IMR-90 (cell line): ENCODE measurements at regions of chr9 and their contacts with region 1.

Region 1: GRCh38 chr9:5696884-5697283 is 68.0 kb downstream of the RIC1 start:
- DNase-seq: no peak
- ATAC-seq: no peak
- H3K4me3 ChIP-seq: no peak overlapping the region
- H3K27ac ChIP-seq: no peak overlapping the region
- H3K4me1 ChIP-seq: peaks cover 18% of the 10 kb centered on the region
- H3K27me3 ChIP-seq: no peaks in the 10 kb centered on the region
- CTCF ChIP-seq: no peak
- POLR2A ChIP-seq: no peak
- RAD21 ChIP-seq: no peak

Region 2: DNA sequence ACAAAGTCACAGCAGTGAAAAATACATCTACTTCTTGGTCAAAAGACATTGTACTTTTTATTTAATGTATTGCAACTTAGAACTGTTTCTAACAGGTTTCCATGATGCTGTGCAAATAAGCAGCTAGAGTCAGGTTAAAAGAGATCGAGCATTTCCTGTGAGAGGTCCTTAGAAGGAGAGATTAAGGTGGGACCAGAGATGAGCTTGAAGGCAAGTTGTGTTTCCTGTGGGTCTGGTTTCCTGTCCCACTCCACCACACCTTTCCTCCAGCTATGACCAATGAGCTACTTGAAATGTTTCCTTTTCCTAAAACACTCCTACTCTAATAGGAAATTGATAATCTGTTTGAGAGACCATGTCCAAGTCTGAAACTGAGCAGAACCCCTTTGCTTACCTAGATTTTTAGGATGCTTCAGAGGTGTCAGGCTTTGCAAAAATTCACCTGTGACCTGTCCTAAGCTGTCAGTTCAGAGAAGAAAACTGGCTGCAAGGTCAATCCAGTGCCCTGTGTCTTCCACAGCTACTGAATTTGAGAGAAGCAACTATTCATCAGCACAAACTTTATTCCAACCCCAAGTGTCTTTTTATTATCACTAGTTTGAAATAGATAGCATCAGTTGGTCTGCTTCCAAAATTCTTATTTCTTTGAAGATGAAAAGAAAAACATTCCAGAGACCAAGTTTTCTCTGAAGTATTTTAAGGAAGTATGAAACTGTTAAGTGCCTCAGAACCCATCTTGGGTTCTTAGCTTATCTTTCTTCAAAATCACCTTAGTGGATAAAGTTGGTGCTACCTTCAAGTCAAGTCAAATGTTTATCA is 344.0 kb before region 1 on chr9:
- CTCF ChIA-PET with region 1: no interaction called
- POLR2A ChIA-PET with region 1: no interaction called
- dilution Hi-C with region 1: no loop called
- in situ Hi-C with region 1: no loop called
- intact Hi-C with region 1: no loop called
- DNase-seq: no peak
- ATAC-seq: no peak
- H3K4me3 ChIP-seq: no peak overlapping the region
- H3K27ac ChIP-seq: no peak overlapping the region
- H3K4me1 ChIP-seq: no peaks in the 10 kb centered on the region
- H3K27me3 ChIP-seq: peaks cover 1% of the 10 kb centered on the region; the same call in 1 of the 2 replicates
- CTCF ChIP-seq: no peak
- POLR2A ChIP-seq: no peak
- RAD21 ChIP-seq: no peak

Region 3: GRCh38 chr9:5644501-5644900 is 52.4 kb before region 1 on chr9:
- CTCF ChIA-PET with region 1: no interaction called
- POLR2A ChIA-PET with region 1: no interaction called
- dilution Hi-C with region 1: no loop called
- in situ Hi-C with region 1: no loop called
- intact Hi-C with region 1: loop called (anchors 10 kb)
- DNase-seq: peak; percentile 16
- ATAC-seq: 0 out of 2 replicates have a peak, but pooled peaks have one; percentile 40
- H3K4me3 ChIP-seq: no peak overlapping the region
- H3K27ac ChIP-seq: no peak overlapping the region
- H3K4me1 ChIP-seq: peaks cover 8% of the 10 kb centered on the region
- H3K27me3 ChIP-seq: no peaks in the 10 kb centered on the region
- CTCF ChIP-seq: no peak
- POLR2A ChIP-seq: no peak
- RAD21 ChIP-seq: no peak

Region 4: DNA sequence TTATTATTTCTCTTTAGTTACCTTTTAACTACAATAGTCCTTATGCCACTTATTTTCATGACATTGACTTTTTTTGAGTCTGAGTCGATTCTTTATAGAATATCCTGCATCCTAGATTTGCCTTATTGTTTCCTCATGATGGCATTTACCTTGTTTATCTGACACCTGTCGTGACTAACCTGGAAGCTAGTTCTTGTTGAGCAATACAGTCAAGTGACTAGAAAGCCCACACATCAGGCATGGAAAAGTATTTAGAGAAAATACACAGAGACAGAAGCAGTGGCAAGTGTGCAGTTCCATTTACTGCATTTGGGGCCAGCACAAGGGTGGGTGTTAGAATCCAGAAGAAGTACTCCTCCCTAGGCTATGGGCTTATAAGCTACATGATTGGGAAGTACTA is 38.2 kb after region 1 on chr9:
- CTCF ChIA-PET with region 1: no interaction called
- POLR2A ChIA-PET with region 1: no interaction called
- dilution Hi-C with region 1: no loop called
- in situ Hi-C with region 1: no loop called
- intact Hi-C with region 1: no loop called
- DNase-seq: no peak
- ATAC-seq: no peak
- H3K4me3 ChIP-seq: no peak overlapping the region
- H3K27ac ChIP-seq: no peak overlapping the region
- H3K4me1 ChIP-seq: no peaks in the 10 kb centered on the region
- H3K27me3 ChIP-seq: no peaks in the 10 kb centered on the region
- CTCF ChIP-seq: no peak
- POLR2A ChIP-seq: no peak
- RAD21 ChIP-seq: no peak

Region 5: DNA sequence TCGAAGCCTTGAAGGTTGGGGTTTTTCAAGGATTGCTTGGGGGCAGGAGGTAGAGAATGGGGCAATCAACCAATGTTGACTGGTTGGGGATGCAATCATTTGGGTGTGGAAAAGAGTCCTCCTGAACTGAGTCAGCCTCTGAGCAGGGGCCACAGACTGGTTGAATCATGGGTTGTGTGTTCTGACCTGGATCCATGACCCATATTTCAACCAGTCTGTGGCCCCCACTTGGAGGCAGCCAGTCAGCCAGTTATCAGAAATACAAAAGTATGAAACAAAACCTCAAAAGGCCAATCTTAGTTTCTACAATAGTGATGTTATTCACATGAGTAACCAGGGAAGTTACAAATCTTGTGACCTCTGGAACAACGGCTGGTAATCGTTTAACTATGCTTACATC is 399.9 kb after region 1 on chr9:
- CTCF ChIA-PET with region 1: no interaction called
- POLR2A ChIA-PET with region 1: no interaction called
- dilution Hi-C with region 1: no loop called
- in situ Hi-C with region 1: no loop called
- intact Hi-C with region 1: no loop called
- DNase-seq: peak; percentile 62
- ATAC-seq: peak; percentile 59
- H3K4me3 ChIP-seq: no peak overlapping the region
- H3K27ac ChIP-seq: no peak overlapping the region
- H3K4me1 ChIP-seq: peaks cover 3% of the 10 kb centered on the region
- H3K27me3 ChIP-seq: no peaks in the 10 kb centered on the region; the same call in 1 of the 2 replicates
- CTCF ChIP-seq: no peak
- POLR2A ChIP-seq: no peak
- RAD21 ChIP-seq: no peak

Region 6: GRCh38 chr9:6197330-6197729 is 500.4 kb after region 1 on chr9:
- CTCF ChIA-PET with region 1: no interaction called
- POLR2A ChIA-PET with region 1: no interaction called
- dilution Hi-C with region 1: no loop called
- in situ Hi-C with region 1: no loop called
- intact Hi-C with region 1: no loop called
- DNase-seq: peak; percentile 5
- ATAC-seq: no peak
- H3K4me3 ChIP-seq: no peak overlapping the region
- H3K27ac ChIP-seq: no peak overlapping the region
- H3K4me1 ChIP-seq: no peaks in the 10 kb centered on the region
- H3K27me3 ChIP-seq: peaks cover 7% of the 10 kb centered on the region; the same call in 1 of the 2 replicates
- CTCF ChIP-seq: peak; percentile 38
- POLR2A ChIP-seq: no peak
- RAD21 ChIP-seq: peak; percentile 40; the same call in 1 of the 2 replicates